BJ (cell line): ENCODE measurements at regions of chr11 and their contacts with region 1.

Region 1: GRCh38 chr11:116853461-116854073 is 16.1 kb upstream of the APOA1 start:
- DNase-seq: peak; percentile 87
- H3K4me3 ChIP-seq: no peak overlapping the region
- H3K27me3 ChIP-seq: no peaks in the 10 kb centered on the region
- CTCF ChIP-seq: no peak

Region 2: DNA sequence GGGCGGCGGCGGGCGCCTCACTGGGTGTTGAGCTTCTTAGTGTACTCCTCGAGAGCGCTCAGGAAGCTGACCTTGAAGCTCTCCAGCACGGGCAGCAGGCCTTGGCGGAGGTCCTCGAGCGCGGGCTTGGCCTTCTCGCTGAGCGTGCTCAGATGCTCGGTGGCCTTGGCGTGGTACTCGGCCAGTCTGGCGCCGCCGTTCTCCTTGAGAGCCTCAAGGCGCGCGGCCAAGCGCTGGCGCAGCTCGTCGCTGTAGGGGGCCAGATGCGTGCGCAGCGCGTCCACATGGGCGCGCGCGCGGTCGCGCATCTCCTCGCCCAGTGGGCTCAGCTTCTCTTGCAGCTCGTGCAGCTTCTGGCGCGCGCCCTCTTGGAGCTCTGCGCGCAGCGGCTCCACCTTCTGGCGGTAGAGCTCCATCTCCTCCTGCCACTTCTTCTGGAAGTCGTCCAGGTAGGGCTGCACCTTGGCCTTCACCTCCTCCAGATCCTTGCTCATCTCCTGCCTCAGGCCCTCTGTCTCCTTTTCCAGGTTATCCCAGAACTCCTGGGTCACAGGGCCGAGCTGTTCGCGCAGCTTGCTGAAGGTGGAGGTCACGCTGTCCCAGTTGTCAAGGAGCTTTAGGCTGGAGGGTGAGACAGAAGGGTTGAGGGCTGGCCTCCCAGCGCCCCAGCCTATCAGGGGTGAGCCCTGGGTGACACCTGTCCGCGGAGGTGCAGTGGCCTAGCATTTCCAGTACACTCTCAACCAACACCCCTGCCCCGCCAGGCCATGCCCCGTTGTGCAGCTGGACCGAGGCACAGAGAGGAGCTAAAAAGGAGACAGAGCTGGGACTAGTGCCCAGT is 17.6 kb before region 1 on chr11:
- CTCF ChIA-PET with region 1: interaction called, 19 read pairs
- POLR2A ChIA-PET with region 1: no interaction called
- DNase-seq: peak; percentile 75
- H3K4me3 ChIP-seq: peak overlapping the region; percentile 22; the same call in 1 of the 2 replicates
- H3K27me3 ChIP-seq: no peaks in the 10 kb centered on the region
- CTCF ChIP-seq: peak; percentile 75

Region 3: DNA sequence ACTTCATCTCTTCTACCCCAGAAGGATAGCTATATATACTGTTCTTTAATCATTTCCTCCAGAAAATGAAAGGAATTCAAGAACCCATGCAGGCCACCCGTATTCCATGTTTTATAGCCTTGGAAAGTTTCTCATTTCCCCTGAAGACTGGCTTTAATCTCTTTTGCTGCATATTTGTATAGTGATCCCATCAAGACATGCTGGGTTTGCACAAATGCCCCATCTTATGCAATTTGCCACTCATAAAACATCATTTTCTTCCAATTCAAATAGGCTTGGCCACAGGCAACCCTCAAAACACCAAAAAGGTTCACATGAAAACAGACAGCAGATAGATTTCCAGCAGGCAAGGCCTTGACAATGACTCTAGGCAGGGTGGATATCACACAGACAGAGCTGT is 12.1 kb after region 1 on chr11:
- CTCF ChIA-PET with region 1: interaction called, 13 read pairs
- POLR2A ChIA-PET with region 1: no interaction called
- DNase-seq: peak; percentile 85
- H3K4me3 ChIP-seq: no peak overlapping the region
- H3K27me3 ChIP-seq: no peaks in the 10 kb centered on the region
- CTCF ChIP-seq: no peak